ENCODE measurements at regions of chr9 and their contacts with region 1.

Region 1: GRCh38 chr9:130707225-130707976 is 13.8 kb downstream of the EXOSC2 start:
- DNase-seq: peak; percentile 49 to 82
- ATAC-seq: peak; percentile 50

Region 2: DNA sequence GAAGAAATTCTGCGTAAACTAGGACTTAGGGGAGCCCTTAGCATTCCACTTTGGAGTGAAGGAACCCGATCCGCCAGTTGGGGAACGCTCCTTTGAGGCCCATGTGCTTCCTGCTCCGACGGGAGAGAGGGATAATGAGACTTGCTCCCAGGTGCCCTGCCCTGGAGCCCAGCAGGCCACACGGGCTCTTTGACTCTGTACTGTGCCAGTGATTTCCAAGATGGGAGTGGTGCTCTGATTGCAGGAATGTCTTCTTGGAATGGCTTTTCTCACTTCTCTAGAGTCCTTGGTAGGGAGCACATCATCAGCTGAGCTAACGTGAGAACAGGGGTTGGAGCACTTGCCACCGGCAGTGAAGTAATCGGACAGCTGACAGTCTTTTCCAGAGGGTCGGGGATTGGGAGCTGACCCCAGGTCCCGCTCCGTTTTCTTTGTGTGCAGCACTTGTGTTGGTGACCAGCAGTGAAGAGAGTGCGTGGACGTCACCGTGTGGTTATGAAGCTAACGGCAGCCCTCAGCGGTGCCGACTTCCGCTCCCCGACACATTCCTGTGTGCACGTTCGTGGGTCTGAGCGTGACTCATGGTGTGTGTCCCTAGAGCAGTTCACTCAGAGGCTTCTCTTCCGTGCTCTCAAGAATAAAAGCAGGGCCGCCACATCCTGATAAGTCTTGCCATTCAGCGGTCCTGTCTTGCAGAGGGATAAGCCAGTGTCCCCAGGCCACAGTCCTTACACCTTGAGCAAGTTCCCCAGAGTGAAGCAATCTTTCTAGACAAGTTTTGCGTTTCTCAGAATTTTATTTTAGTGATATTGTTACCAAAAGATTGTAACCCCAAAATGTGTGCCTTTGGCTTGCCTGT is 153.3 kb after region 1 on chr9:
- intact Hi-C with region 1: loop called (anchors 5 to 10 kb)
- DNase-seq: peak; percentile 54 to 73
- ATAC-seq: peak; percentile 28

Measured in left colon (tissue), 2 donors.